AG04450 (cell line): ENCODE measurements at regions of chr2 and their contacts with region 1.

Region 1: DNA sequence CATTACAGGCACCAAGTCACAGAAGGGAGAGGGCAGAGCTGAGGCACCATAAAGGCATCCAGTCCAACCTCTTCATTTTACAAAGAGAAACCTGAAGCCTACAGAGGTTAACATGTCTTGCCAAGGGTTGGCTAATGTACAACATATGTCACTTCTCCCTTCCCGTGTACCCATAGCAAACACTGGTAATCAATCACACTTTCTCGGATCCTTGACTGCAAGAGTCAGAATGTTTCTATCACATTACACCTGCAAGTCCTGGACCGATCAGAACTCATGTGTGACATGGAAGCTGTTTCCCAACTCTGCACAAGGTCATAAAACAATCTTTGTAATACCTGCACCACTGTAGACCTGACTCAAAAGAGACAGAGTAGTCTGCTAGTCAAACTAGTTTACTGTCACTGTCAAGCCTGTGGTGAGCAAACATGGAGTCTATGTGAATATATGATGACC is 6.0 kb downstream of the ANKRD44 start:
- DNase-seq: no peak
- H3K4me3 ChIP-seq: no peak overlapping the region
- H3K27ac ChIP-seq: no peak overlapping the region
- H3K27me3 ChIP-seq: no peaks in the 10 kb centered on the region
- CTCF ChIP-seq: no peak

Region 2: GRCh38 chr2:196967116-196967515 is 337.5 kb before region 1 on chr2:
- CTCF ChIA-PET with region 1: no interaction called
- POLR2A ChIA-PET with region 1: no interaction called
- DNase-seq: no peak
- H3K4me3 ChIP-seq: peak overlapping the region; percentile 34
- H3K27ac ChIP-seq: no peak overlapping the region
- H3K27me3 ChIP-seq: no peaks in the 10 kb centered on the region
- CTCF ChIP-seq: no peak

Region 3: DNA sequence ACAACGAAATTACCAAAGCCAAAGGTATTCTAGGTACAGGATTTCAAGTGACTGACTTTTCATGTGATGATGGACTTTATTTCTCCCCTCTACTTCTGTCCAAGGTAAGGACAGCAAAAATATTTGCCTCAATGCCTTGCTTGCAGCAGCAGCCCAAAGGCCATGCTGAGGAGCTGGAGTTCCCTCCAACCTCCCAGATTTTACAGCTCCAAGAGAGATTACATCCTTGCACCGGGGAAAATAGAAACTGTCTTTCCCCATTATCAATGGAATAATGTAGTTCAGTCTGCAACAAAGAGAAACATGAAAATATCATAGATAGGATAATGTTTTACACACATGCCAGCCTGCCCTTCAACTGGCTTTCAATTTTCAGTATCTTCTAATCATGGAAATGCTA is 181.6 kb after region 1 on chr2:
- CTCF ChIA-PET with region 1: no interaction called
- POLR2A ChIA-PET with region 1: interaction called, 10 read pairs
- DNase-seq: no peak
- H3K4me3 ChIP-seq: no peak overlapping the region
- H3K27ac ChIP-seq: no peak overlapping the region
- H3K27me3 ChIP-seq: no peaks in the 10 kb centered on the region
- CTCF ChIP-seq: no peak